ENCODE measurements at regions of chr12 and their contacts with region 1.

Region 1: DNA sequence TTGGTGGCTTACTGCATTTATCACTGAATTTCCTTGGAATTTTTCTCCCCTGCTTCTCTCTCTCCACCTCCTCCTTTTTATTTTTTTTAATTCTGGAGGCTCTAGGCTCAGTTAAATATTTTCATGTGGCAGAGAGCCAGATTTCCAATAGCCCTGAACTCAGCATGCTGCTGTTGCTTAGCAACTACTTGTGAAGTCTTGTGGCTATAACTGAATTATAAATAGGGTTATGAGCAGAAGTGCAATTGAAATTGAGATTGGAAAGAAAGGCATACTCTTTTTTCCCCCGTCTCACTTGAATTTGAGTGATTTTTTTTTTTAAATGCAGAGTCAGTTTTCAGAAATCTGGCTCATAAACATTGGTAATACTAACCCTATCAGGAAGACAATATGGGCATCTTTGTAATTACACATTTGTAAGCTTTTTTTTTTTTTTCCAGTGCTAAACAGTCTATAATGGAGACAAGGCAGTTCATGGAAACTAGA is 38.3 kb downstream of the ATF7IP start:
- DNase-seq: peak; percentile 52
- H3K4me3 ChIP-seq: peak overlapping the region; percentile 22
- H3K27ac ChIP-seq: peak overlapping the region; percentile 29
- H3K4me1 ChIP-seq: peaks cover 26% of the 10 kb centered on the region
- CTCF ChIP-seq: no peak

Region 2: DNA sequence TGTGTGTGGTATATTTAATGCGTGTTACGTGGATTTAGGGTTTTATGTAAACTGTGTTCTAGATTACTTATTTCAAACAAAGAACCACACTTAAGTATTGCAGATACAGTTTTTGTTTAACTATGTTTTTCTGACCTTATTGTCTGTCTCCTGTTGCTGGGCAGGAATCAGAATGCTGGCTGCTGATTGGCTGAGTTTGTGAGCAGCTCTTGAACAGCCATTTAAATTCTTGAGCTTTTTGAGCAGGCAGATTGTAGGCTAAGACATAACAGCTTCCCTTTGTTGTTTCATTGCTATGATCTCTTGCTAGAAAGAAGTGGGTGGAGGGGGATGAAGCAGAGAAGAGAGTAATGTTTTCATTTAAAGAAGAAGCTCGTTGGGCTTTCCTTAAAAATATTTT is 14.0 kb after region 1 on chr12:
- CTCF ChIA-PET with region 1: no interaction called
- POLR2A ChIA-PET with region 1: interaction called, 14 read pairs
- intact Hi-C with region 1: no loop called
- DNase-seq: peak; percentile 47
- H3K4me3 ChIP-seq: no peak overlapping the region
- H3K27ac ChIP-seq: no peak overlapping the region
- H3K4me1 ChIP-seq: peaks cover 9% of the 10 kb centered on the region
- CTCF ChIP-seq: no peak

Measured in OCI-LY7 (cell line).